ENCODE measurements at regions of chr1 and their contacts with region 1.

Region 1: DNA sequence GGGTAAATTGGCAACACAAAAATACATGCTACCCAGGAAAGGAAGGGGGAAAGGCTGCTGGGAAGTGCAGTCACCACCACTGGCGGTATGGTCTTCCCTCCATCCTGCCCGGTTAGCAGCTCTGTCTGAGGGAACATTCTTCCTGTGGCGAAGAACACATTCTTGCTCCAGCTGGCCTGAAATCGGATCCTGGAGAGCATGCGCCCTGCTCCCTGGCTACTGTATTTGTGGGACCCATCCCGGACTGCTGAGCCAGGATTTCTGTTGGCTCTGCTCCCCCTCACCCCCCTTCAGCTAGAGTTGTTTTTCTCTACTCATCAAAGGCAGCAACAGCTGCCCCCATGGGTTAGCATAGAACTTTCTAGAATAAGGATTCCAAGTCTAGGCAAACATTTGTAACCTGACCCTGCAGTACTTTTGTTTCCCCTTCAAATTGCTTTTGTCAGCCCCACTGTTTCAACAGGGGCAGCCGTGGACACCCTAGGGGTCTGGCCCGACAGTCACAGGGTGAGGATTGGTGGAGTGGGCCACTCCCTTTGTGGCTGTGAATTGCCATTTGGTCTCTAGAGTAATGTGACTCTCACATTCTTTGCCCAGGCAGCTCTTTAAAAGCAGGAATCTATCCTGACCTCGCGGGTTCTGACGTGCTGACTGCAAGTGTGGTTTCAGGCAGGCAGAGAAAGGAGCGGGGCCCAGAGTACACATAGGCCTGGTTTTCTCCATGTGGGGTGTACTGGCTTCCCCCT is 157.7 kb downstream of the TOMM20 start:
- DNase-seq: no peak
- H3K4me3 ChIP-seq: no peak overlapping the region
- H3K27ac ChIP-seq: peak overlapping the region; percentile 10
- H3K4me1 ChIP-seq: peaks cover 61% of the 10 kb centered on the region
- H3K27me3 ChIP-seq: no peaks in the 10 kb centered on the region
- CTCF ChIP-seq: no peak

Region 2: GRCh38 chr1:235160957-235161684 is 190.2 kb after region 1 on chr1 and contains the start of gene RBM34:
- CTCF ChIA-PET with region 1: no interaction called
- POLR2A ChIA-PET with region 1: interaction called, 30 read pairs
- intact Hi-C with region 1: no loop called
- DNase-seq: peak; percentile 80 to 95
- H3K4me3 ChIP-seq: peak within 1 kb of the TSS; percentile 73
- H3K27ac ChIP-seq: peak within 1 kb of the TSS; percentile 85
- H3K4me1 ChIP-seq: peaks cover 16% of the 10 kb centered on the region
- H3K27me3 ChIP-seq: no peaks in the 10 kb centered on the region
- CTCF ChIP-seq: no peak
- total RNA-seq, gene RBM34: 101 and 106 TPM in 2 replicates

Region 3: GRCh38 chr1:236281654-236282424 is 1310.9 kb after region 1 on chr1 and contains the start of gene ERO1B:
- CTCF ChIA-PET with region 1: no interaction called
- POLR2A ChIA-PET with region 1: no interaction called
- intact Hi-C with region 1: no loop called
- DNase-seq: peak in 1 of 2 experiments; percentile 74
- H3K4me3 ChIP-seq: no peak within 1 kb of the TSS
- H3K27ac ChIP-seq: no peak within 1 kb of the TSS
- H3K4me1 ChIP-seq: no peaks in the 10 kb centered on the region
- H3K27me3 ChIP-seq: no peaks in the 10 kb centered on the region
- CTCF ChIP-seq: no peak
- total RNA-seq, gene ERO1B: not detected in 2 replicates